OCI-LY7 (cell line): ENCODE measurements at regions of chr4 and their contacts with region 1.

Region 1: DNA sequence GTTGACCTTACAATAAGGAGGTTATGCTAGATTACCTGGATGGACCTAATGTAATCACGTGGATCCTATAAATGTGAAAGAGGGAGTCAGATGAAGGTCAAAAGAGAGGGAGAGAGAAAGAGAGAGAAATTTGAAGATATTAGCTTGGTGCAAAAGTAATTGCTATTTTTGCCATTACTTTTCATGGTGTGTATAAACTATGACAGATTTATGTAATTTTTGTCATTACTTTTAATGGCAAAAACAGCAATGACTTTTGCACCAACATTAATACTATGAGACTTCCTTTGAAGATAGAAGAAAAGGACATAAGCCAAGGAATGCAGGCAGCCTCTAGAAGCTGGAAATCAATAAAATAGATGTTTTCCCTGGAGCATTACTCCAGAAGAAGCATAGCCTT is 448.2 kb downstream of the TLL1 start:
- DNase-seq: no peak
- H3K4me3 ChIP-seq: no peak overlapping the region
- H3K27ac ChIP-seq: no peak overlapping the region
- H3K4me1 ChIP-seq: no peaks in the 10 kb centered on the region
- CTCF ChIP-seq: no peak

Region 2: GRCh38 chr4:166308647-166309046 is 12.6 kb before region 1 on chr4:
- CTCF ChIA-PET with region 1: no interaction called
- POLR2A ChIA-PET with region 1: no interaction called
- intact Hi-C with region 1: no loop called
- DNase-seq: no peak
- H3K4me3 ChIP-seq: no peak overlapping the region
- H3K27ac ChIP-seq: no peak overlapping the region
- H3K4me1 ChIP-seq: no peaks in the 10 kb centered on the region
- CTCF ChIP-seq: no peak

Region 3: DNA sequence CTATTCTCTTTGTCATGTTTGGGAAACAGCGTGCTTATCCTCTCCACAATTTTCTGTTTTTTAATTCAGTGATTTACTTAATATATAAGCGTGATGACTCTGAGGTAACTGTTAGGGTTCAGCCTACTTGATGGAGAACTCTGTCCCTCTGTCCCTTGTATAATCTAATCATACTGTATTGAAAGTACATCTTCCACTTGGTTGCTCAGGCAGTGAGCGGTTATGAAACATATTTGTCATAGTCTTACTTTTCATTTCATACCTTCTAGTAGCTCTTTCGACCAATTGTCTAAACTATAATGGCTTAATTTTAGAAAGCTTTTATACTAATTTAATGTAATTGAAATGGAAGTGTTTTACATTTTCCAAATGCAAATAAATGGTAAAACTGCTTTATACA is 20.7 kb after region 1 on chr4:
- CTCF ChIA-PET with region 1: no interaction called
- POLR2A ChIA-PET with region 1: interaction called, 12 read pairs
- intact Hi-C with region 1: no loop called
- DNase-seq: no peak
- H3K4me3 ChIP-seq: no peak overlapping the region
- H3K27ac ChIP-seq: no peak overlapping the region
- H3K4me1 ChIP-seq: no peaks in the 10 kb centered on the region
- CTCF ChIP-seq: no peak